ENCODE measurements at regions of chr10 and their contacts with region 1.

Region 1: DNA sequence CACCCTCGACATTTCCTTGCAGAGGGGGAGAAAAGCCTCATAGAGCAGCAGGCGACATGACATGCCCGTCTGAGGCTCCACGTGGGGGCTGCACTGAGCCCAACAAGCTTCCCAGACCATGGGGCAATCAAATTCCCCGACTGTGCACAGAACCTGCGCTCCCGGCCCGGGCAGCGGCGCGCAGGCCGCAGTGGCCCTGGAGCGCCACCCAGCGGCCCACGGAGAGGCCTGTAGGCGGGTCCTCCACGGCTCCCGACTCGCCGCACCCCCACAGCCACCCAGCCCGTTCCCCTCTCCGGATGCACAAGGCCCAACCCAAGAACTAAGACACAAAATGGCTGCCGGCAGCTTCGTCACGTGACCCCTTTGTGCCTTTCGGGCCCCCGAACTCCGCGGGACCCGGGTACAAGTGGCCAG is 816 bp downstream of the EPC1 start:
- DNase-seq: peak; percentile 93
- H3K4me3 Mint-ChIP-seq: peak overlapping the region; percentile 92
- H3K27ac Mint-ChIP-seq: peak overlapping the region; percentile 99
- H3K4me1 Mint-ChIP-seq: peaks cover 50% of the 10 kb centered on the region
- H3K27me3 Mint-ChIP-seq: no peaks in the 10 kb centered on the region

Region 2: GRCh38 chr10:31875608-31876007 is 470.5 kb before region 1 on chr10:
- intact Hi-C with region 1: no loop called
- DNase-seq: no peak
- H3K4me3 Mint-ChIP-seq: no peak overlapping the region
- H3K27ac Mint-ChIP-seq: no peak overlapping the region
- H3K4me1 Mint-ChIP-seq: peaks cover 18% of the 10 kb centered on the region
- H3K27me3 Mint-ChIP-seq: peaks cover 1% of the 10 kb centered on the region

Region 3: DNA sequence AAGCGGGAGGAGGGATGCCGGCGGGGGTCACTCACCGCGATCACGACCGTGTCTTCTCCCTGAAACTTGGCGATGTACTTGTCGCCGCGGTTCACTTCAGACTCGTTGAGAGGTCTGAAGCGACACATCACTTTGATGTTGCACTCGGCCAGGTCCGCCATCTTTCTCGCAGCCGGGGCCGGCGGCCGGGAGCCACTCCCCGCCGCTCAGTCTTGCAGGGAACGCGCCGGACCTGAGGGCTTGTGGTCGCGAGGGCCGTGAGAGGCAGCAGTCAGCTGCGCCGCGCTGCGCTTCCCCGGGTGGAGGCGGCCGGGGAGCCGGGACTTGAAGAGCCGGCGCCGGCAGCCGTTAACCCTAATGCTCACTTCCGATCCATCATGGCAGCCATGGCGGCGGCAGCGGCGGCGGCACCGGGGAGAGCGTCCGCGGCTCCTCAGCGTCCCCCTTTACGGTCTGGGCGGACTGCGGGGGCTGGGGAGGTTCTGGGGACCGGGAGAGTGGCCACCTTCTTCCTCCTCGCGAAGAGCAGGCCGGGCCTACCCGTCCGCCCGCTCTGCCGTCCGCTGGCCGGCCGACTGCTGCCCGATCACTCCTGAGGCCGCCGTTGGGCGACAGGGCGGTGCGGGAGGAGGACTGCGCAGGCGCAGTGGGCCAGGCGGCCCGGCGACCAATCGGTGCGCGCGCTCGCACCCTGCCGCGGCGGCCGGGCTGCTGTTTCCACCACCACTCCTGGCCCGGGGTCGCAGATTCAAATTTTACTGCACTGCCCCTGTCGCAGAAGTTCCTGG is 290.1 kb before region 1 on chr10 and contains the start of gene KIF5B:
- intact Hi-C with region 1: loop called (anchors 10 kb)
- DNase-seq: peak; percentile 85
- H3K4me3 Mint-ChIP-seq: peak within 1 kb of the TSS; percentile 88
- H3K27ac Mint-ChIP-seq: peak within 1 kb of the TSS; percentile 90
- H3K4me1 Mint-ChIP-seq: peaks cover 36% of the 10 kb centered on the region
- H3K27me3 Mint-ChIP-seq: no peaks in the 10 kb centered on the region
- total RNA-seq, gene KIF5B: 76.6 and 79.0 TPM in 2 replicates

Region 4: GRCh38 chr10:32190890-32191491 is 155.2 kb before region 1 on chr10:
- intact Hi-C with region 1: loop called (anchors 2 kb)
- DNase-seq: no peak
- H3K4me3 Mint-ChIP-seq: no peak overlapping the region
- H3K27ac Mint-ChIP-seq: no peak overlapping the region
- H3K4me1 Mint-ChIP-seq: peaks cover 4% of the 10 kb centered on the region
- H3K27me3 Mint-ChIP-seq: peaks cover 5% of the 10 kb centered on the region

Region 5: DNA sequence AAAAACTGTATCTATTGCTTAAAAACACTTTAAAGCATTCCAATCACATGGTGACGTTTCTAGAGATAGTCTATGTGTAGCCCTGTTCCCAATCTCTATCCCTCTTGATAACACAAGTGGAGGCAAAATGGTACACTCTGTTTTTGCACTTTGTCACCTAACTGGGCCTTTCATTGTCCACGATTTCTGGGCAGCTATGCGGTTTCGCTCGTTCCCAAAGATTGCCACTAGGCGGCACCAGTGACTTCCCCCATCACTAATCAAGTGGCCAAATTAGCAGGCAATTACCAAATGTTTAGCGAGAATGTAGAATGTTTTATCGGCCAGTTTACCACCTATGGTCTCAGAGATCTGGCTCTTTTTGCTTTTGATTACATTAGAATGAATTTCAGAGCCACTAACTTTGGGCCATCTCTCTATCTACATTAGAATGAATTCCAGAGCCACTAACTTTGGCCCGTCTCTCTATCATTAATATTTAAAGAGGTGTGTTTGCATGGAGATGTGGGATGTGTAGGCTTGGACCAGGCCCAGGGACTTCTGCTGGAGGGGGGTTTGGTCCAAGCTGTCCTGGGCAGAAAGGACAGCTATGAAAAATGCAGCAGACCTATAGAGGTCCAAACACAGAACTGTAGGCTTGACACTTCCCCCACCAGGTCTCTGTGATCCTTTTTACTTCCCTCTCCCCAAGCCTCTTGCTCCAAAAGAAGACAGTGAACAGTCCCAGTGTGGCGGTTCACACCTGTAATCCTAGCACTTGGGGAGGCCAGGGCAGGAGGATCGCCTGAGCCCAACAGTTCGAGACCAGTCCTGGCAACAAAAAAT is 89.3 kb before region 1 on chr10:
- intact Hi-C with region 1: loop called (anchors 1 kb)
- DNase-seq: peak; percentile 59
- H3K4me3 Mint-ChIP-seq: no peak overlapping the region
- H3K27ac Mint-ChIP-seq: no peak overlapping the region
- H3K4me1 Mint-ChIP-seq: peaks cover 13% of the 10 kb centered on the region
- H3K27me3 Mint-ChIP-seq: no peaks in the 10 kb centered on the region

Region 6: DNA sequence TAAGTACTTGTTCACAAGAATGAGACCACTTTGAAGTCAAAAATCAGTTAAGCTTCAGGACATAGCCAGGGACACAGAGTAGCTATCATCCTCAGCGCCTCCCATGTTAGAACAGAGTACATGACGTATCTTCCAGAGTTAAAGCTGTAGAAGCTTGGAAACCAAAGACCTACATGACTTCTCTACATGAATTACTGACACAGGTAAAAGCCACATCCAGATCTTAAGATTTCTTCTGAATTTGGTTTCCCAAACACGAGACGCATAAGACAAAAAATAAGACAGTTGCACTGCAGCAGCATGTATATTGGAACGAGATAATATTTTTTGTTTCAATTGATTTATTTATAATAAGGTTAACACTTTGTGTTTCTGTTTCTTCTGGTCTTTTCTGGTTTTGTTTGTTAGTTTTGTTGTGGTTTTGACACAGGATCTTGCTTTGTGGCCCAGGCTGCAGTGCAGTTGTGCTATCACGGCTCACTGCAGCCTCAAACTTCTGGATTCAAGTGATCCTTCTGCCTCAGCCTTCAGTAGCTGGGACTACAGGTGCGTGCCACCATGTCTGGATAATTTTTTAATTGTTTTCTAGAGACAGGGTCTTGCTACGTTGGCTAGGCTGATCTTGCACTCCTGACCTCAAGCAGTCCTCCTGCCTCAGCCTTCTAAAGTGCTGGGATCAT is 11.1 kb after region 1 on chr10:
- intact Hi-C with region 1: loop called (anchors 1 kb)
- DNase-seq: no peak
- H3K4me3 Mint-ChIP-seq: peak overlapping the region; percentile 73
- H3K27ac Mint-ChIP-seq: peak overlapping the region; percentile 84
- H3K4me1 Mint-ChIP-seq: peaks cover 59% of the 10 kb centered on the region
- H3K27me3 Mint-ChIP-seq: no peaks in the 10 kb centered on the region